Activated naive CD4-positive, alpha-beta T cell treated with anti-CD3 and anti-CD28 coated beads for 36 hours (primary cell): ENCODE measurements at regions of chr9 and their contacts with region 1.

Region 1: GRCh38 chr9:69822091-69822750 is 1.6 kb downstream of the CFAP95 start:
- DNase-seq: no peak
- H3K4me3 Mint-ChIP-seq: no peak overlapping the region
- H3K27ac Mint-ChIP-seq: no peak overlapping the region
- H3K4me1 Mint-ChIP-seq: peaks cover 27% of the 10 kb centered on the region
- H3K27me3 Mint-ChIP-seq: peaks cover 19% of the 10 kb centered on the region

Region 2: GRCh38 chr9:69174616-69175463 is 647.4 kb before region 1 on chr9:
- CTCF ChIA-PET with region 1: no interaction called
- intact Hi-C with region 1: loop called (anchors 10 kb)
- DNase-seq: peak; percentile 84
- H3K4me3 Mint-ChIP-seq: peak overlapping the region; percentile 77
- H3K27ac Mint-ChIP-seq: peak overlapping the region; percentile 37
- H3K4me1 Mint-ChIP-seq: peaks cover 39% of the 10 kb centered on the region
- H3K27me3 Mint-ChIP-seq: peaks cover 43% of the 10 kb centered on the region

Region 3: GRCh38 chr9:69297300-69297980 is 524.8 kb before region 1 on chr9:
- CTCF ChIA-PET with region 1: no interaction called
- intact Hi-C with region 1: no loop called
- DNase-seq: no peak
- H3K4me3 Mint-ChIP-seq: no peak overlapping the region
- H3K27ac Mint-ChIP-seq: no peak overlapping the region
- H3K4me1 Mint-ChIP-seq: no peaks in the 10 kb centered on the region
- H3K27me3 Mint-ChIP-seq: no peaks in the 10 kb centered on the region

Region 4: GRCh38 chr9:69672596-69673310 is 149.5 kb before region 1 on chr9:
- CTCF ChIA-PET with region 1: no interaction called
- intact Hi-C with region 1: loop called (anchors 5 kb)
- DNase-seq: peak; percentile 81
- H3K4me3 Mint-ChIP-seq: peak overlapping the region; percentile 72
- H3K27ac Mint-ChIP-seq: no peak overlapping the region
- H3K4me1 Mint-ChIP-seq: peaks cover 9% of the 10 kb centered on the region
- H3K27me3 Mint-ChIP-seq: peaks cover 12% of the 10 kb centered on the region